GM12878 (cell line): ENCODE measurements at regions of chr1 and their contacts with region 1.

Region 1: GRCh38 chr1:224513787-224514209 is 79.2 kb upstream of the WDR26 start:
- DNase-seq: no peak
- ATAC-seq: peak; percentile 100
- H3K4me3 ChIP-seq: no peak overlapping the region
- H3K27ac ChIP-seq: no peak overlapping the region
- H3K4me1 ChIP-seq: 0 out of 2 replicates have a peak, but pooled peaks cover 5% of the 10 kb centered on the region
- H3K27me3 ChIP-seq: no peaks in the 10 kb centered on the region
- CTCF ChIP-seq: peak; percentile 86 to 98 (median 92); a peak in 5 of 6 replicates
- EP300 ChIP-seq: no peak
- POLR2A ChIP-seq: no peak
- RAD21 ChIP-seq: peak; percentile 92

Region 2: DNA sequence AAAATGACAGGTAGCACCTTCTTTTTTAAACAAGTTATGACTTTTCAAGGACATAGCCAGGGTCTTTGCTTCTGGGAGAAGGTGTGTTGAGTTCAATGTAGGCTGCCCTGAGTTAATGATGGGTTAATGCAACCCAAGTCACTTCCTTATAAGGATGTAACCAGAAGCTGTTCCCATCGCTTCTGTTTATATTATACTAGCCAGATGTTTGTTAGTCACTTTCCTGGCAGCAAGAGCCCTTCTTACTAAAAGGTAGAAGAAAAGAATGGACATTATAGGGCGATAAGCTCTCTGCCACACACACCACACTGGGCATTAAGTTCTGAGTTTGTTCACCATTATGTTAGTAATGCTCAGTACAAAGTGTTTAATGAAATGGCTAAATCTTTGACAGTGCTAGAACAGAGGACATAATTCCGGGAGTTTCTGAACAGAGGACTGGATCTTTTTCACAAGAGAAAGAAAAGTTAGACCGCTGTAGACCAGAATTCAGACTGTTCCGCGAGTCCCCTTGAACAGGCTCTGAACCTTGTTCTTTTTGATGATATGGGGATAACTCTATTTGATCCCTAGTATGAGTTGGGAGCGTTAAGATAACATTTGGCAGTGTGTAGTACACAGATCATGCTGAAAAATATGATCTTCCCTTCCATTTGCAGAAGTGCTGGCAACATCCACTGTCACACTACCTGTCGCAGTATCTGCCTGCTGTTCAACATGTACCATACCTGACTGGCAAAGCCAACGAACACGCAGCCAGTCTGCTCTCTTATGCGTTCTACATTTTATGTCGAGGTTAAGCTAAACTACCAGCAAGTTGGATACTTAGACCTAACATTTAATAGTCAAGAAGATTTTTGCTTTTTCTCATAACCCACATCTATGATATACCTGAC is 289.7 kb before region 1 on chr1:
- CTCF ChIA-PET with region 1: no interaction called
- POLR2A ChIA-PET with region 1: no interaction called
- RAD21 ChIA-PET with region 1: no interaction called
- SMC1A ChIA-PET with region 1: no interaction called
- in situ Hi-C with region 1: no loop called
- intact Hi-C with region 1: no loop called
- DNase-seq: no peak
- ATAC-seq: no peak
- H3K4me3 ChIP-seq: no peak overlapping the region
- H3K27ac ChIP-seq: no peak overlapping the region
- H3K4me1 ChIP-seq: no peaks in the 10 kb centered on the region
- H3K27me3 ChIP-seq: no peaks in the 10 kb centered on the region
- CTCF ChIP-seq: no peak
- EP300 ChIP-seq: no peak
- POLR2A ChIP-seq: no peak
- RAD21 ChIP-seq: no peak

Region 3: GRCh38 chr1:224497714-224498573 is 15.9 kb before region 1 on chr1:
- CTCF ChIA-PET with region 1: interaction called, 31 read pairs
- POLR2A ChIA-PET with region 1: no interaction called
- RAD21 ChIA-PET with region 1: interaction called, 11 read pairs
- SMC1A ChIA-PET with region 1: interaction called, 15 read pairs
- in situ Hi-C with region 1: no loop called
- intact Hi-C with region 1: no loop called
- DNase-seq: peak; percentile 80
- ATAC-seq: peak; percentile 98
- H3K4me3 ChIP-seq: peak overlapping the region; percentile 28; the same call in 1 of the 2 replicates
- H3K27ac ChIP-seq: peak overlapping the region; percentile 92
- H3K4me1 ChIP-seq: peaks cover 37% of the 10 kb centered on the region
- H3K27me3 ChIP-seq: no peaks in the 10 kb centered on the region
- CTCF ChIP-seq: no peak
- EP300 ChIP-seq: peak in 1 of 2 experiments; percentile 82; a peak in 2 of 4 replicates
- POLR2A ChIP-seq: peak; percentile 54
- RAD21 ChIP-seq: no peak

Region 4: DNA sequence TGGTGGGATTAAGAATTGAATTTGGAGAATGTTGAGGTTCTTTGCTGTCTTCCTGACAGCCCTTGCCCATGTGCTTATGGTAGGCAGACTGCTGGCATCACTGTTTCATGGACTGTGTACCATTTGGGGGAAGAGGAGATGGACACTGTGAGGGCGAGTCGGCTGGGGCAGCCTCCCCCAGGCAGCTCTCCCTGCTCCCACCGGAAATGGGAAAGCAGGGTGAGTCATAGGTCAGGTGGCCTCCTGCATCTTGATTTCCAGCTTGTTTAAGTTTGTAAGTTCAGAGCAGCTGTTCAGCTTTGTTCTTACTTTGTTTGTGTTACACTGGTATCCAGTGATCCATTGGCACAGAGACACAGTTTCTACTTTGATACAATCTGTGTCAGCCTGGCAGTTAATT is 15.1 kb after region 1 on chr1:
- CTCF ChIA-PET with region 1: interaction called, 22 read pairs
- POLR2A ChIA-PET with region 1: no interaction called
- RAD21 ChIA-PET with region 1: no interaction called
- SMC1A ChIA-PET with region 1: interaction called, 7 read pairs
- in situ Hi-C with region 1: no loop called
- intact Hi-C with region 1: no loop called
- DNase-seq: no peak
- ATAC-seq: no peak
- H3K4me3 ChIP-seq: no peak overlapping the region
- H3K27ac ChIP-seq: no peak overlapping the region
- H3K4me1 ChIP-seq: no peaks in the 10 kb centered on the region
- H3K27me3 ChIP-seq: no peaks in the 10 kb centered on the region
- CTCF ChIP-seq: no peak
- EP300 ChIP-seq: no peak
- POLR2A ChIP-seq: no peak
- RAD21 ChIP-seq: no peak

Region 5: GRCh38 chr1:224644553-224645154 is 130.9 kb after region 1 on chr1:
- CTCF ChIA-PET with region 1: interaction called, 32 read pairs
- POLR2A ChIA-PET with region 1: no interaction called
- RAD21 ChIA-PET with region 1: interaction called, 3 read pairs
- SMC1A ChIA-PET with region 1: interaction called, 13 read pairs
- in situ Hi-C with region 1: loop called (anchors 5 kb)
- intact Hi-C with region 1: loop called (anchors 1 kb)
- DNase-seq: peak; percentile 24
- ATAC-seq: peak; percentile 85
- H3K4me3 ChIP-seq: no peak overlapping the region
- H3K27ac ChIP-seq: no peak overlapping the region
- H3K4me1 ChIP-seq: no peaks in the 10 kb centered on the region
- H3K27me3 ChIP-seq: no peaks in the 10 kb centered on the region; a peak in 1 of 4 replicates
- CTCF ChIP-seq: peak; percentile 84 to 91 (median 90)
- EP300 ChIP-seq: no peak
- POLR2A ChIP-seq: no peak
- RAD21 ChIP-seq: peak; percentile 84

Region 6: DNA sequence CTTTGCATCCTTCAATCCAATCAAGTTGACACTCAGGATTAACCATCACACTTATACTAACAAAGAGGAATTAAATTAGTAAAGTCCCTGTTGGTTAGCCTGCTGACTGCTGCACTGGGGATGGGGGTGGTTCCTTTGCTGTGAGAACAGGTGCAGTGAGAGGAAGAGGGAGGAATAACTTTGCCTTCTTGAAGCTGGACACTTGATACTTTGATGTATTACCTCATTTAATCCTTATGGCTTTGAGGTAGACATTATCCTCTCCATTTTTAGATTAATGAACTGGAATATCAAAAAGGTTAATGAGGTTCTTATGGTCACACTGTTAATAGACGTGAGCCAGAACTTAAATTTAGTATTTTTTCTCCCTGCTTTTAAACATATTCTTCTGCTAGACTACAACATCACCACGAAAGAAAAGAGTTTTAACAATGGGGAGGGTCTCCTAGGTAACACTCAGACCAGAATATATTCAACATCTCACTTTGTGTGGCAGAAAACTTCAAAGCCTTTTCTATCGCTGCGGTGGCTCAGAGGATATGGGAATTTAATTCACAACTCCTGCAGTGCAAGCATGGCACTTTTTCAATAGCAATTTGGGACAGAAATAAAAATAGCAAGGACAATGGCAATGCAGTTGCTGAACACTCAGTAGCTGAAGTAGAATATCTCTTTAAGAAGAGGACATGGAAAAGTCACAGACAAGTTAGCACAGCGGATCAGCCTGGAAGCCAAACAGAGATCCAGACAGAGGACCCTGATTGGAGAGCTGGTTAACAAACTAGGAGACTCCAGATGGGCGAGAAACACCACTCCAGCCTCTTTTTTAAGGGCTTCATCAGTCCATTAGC is 346.9 kb after region 1 on chr1:
- CTCF ChIA-PET with region 1: interaction called, 191 read pairs
- POLR2A ChIA-PET with region 1: no interaction called
- RAD21 ChIA-PET with region 1: interaction called, 35 read pairs
- SMC1A ChIA-PET with region 1: interaction called, 25 read pairs
- in situ Hi-C with region 1: no loop called
- intact Hi-C with region 1: no loop called
- DNase-seq: no peak
- ATAC-seq: no peak
- H3K4me3 ChIP-seq: no peak overlapping the region
- H3K27ac ChIP-seq: no peak overlapping the region
- H3K4me1 ChIP-seq: no peaks in the 10 kb centered on the region
- H3K27me3 ChIP-seq: no peaks in the 10 kb centered on the region; a peak in 1 of 4 replicates
- CTCF ChIP-seq: no peak
- EP300 ChIP-seq: no peak
- POLR2A ChIP-seq: no peak
- RAD21 ChIP-seq: no peak

Region 7: DNA sequence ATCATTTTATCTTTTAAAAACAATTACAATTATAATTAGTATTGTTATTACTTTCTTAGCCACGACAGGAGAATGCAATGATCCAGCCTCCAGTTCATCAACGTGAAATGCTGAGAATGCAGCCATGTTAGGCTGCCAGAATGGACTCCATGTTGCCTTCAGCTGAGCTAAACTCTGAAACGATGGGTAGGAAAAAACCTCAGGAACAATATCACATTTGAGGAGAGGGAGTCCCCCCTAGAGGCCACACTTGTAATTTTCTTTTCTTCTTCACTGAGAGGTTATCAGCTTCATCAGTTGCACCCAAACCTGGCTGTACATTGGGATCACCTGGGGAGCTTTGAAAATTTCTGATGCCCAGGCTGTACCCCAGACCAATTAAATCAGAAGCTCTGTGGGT is 381.1 kb after region 1 on chr1:
- CTCF ChIA-PET with region 1: interaction called, 63 read pairs
- POLR2A ChIA-PET with region 1: no interaction called
- RAD21 ChIA-PET with region 1: interaction called, 14 read pairs
- SMC1A ChIA-PET with region 1: interaction called, 21 read pairs
- in situ Hi-C with region 1: no loop called
- intact Hi-C with region 1: no loop called
- DNase-seq: no peak
- ATAC-seq: peak; percentile 61
- H3K4me3 ChIP-seq: no peak overlapping the region
- H3K27ac ChIP-seq: no peak overlapping the region
- H3K4me1 ChIP-seq: no peaks in the 10 kb centered on the region
- H3K27me3 ChIP-seq: no peaks in the 10 kb centered on the region
- CTCF ChIP-seq: peak; percentile 17 to 20 (median 17); a peak in 3 of 6 replicates
- EP300 ChIP-seq: no peak
- POLR2A ChIP-seq: no peak
- RAD21 ChIP-seq: peak; percentile 26